Endothelial cell of umbilical vein (primary cell): ENCODE measurements at regions of chr6 and their contacts with region 1.

Region 1: DNA sequence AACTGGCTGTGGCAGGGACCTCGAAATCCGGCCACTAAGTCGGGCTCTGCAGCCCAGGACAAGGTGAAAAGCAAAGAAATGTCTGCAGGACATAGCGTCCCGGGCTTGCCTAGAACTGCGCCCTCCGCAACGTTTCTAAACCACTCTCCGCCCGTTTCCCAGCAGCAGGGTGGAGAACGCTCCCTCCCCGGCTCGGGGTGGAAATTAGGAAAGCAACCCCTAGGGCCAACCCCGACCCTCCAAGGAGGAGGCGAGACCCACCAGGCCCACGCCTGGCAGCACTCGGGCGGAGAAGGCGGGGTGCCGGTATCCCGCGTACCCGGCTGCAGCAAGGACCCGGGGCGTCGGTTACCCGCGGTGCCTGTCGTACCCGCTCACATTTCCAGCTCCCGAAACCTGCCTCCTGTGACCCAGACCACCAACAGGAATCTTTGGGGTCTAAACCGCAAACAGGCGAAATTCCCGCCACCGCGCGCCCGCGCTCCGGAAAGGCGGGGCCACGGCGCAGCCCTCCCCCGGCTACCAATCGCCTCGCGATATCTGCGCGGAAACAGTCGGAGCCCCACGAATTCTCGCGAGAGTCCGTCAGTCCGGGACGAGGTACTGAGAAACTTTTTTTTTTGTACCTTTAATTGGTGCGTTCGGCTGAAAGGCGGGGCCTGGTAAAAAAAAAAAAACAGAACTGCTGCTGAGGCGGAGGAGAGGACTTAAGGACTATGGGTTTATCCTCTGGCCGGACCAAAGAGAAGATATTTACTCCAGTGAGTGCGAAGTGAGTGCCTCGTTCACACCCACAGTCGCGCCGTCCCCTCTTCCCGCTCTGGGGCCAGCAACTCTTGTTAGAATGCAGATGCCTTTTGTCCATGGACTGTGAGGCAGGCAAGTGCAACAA is at the start of gene MMS22L:
- DNase-seq: peak; percentile 95
- H3K4me3 ChIP-seq: peak within 1 kb of the TSS; percentile 75 to 93 (median 86)
- H3K27ac ChIP-seq: peak within 1 kb of the TSS; percentile 60
- H3K4me1 ChIP-seq: peaks cover 21% of the 10 kb centered on the region
- H3K27me3 ChIP-seq: no peaks in the 10 kb centered on the region
- CTCF ChIP-seq: no peak
- POLR2A ChIP-seq: no peak
- total RNA-seq, gene MMS22L: 19.3 and 22.7 TPM in 2 replicates

Region 2: GRCh38 chr6:97207383-97207782 is 75.6 kb before region 1 on chr6:
- CTCF ChIA-PET with region 1: no interaction called
- POLR2A ChIA-PET with region 1: no interaction called
- dilution Hi-C with region 1: no loop called
- intact Hi-C with region 1: no loop called
- DNase-seq: no peak
- H3K4me3 ChIP-seq: no peak overlapping the region
- H3K27ac ChIP-seq: no peak overlapping the region
- H3K4me1 ChIP-seq: no peaks in the 10 kb centered on the region
- H3K27me3 ChIP-seq: no peaks in the 10 kb centered on the region
- CTCF ChIP-seq: no peak
- POLR2A ChIP-seq: no peak

Region 3: GRCh38 chr6:97240222-97240621 is 42.8 kb before region 1 on chr6:
- CTCF ChIA-PET with region 1: interaction called, 3 read pairs
- POLR2A ChIA-PET with region 1: no interaction called
- dilution Hi-C with region 1: no loop called
- intact Hi-C with region 1: loop called (anchors 1 kb)
- DNase-seq: peak; percentile 90
- H3K4me3 ChIP-seq: no peak overlapping the region
- H3K27ac ChIP-seq: peak overlapping the region; percentile 83
- H3K4me1 ChIP-seq: peaks cover 10% of the 10 kb centered on the region
- H3K27me3 ChIP-seq: no peaks in the 10 kb centered on the region
- CTCF ChIP-seq: no peak
- POLR2A ChIP-seq: no peak

Region 4: GRCh38 chr6:97394160-97394748 is 111.3 kb after region 1 on chr6:
- CTCF ChIA-PET with region 1: no interaction called
- POLR2A ChIA-PET with region 1: no interaction called
- dilution Hi-C with region 1: no loop called
- intact Hi-C with region 1: loop called (anchors 2 kb)
- DNase-seq: peak; percentile 75
- H3K4me3 ChIP-seq: no peak overlapping the region
- H3K27ac ChIP-seq: no peak overlapping the region
- H3K4me1 ChIP-seq: no peaks in the 10 kb centered on the region
- H3K27me3 ChIP-seq: peaks cover 4 to 5% of the 10 kb centered on the region in 2 experiments
- CTCF ChIP-seq: peak; percentile 71 to 73
- POLR2A ChIP-seq: no peak